Breast epithelium (tissue), 4 donors: ENCODE measurements at regions of chr2 and their contacts with region 1.

Region 1: GRCh38 chr2:46989491-46990230 is 74.1 kb upstream of the MCFD2 start:
- DNase-seq: no peak
- H3K4me3 ChIP-seq: no peak overlapping the region
- H3K27ac ChIP-seq: peak overlapping the region; percentile 89 to 93
- H3K4me1 ChIP-seq: peaks cover 27 to 48% of the 10 kb centered on the region in 2 donors
- H3K27me3 ChIP-seq: no peaks in the 10 kb centered on the region
- CTCF ChIP-seq: peak in 1 of 3 donors; percentile 15
- POLR2A ChIP-seq: no peak

Region 2: GRCh38 chr2:46481198-46482193 is 508.2 kb before region 1 on chr2:
- intact Hi-C with region 1: no loop called
- DNase-seq: no peak
- H3K4me3 ChIP-seq: no peak overlapping the region
- H3K27ac ChIP-seq: no peak overlapping the region
- H3K4me1 ChIP-seq: no peaks in the 10 kb centered on the region
- H3K27me3 ChIP-seq: no peaks in the 10 kb centered on the region
- CTCF ChIP-seq: no peak
- POLR2A ChIP-seq: no peak

Region 3: DNA sequence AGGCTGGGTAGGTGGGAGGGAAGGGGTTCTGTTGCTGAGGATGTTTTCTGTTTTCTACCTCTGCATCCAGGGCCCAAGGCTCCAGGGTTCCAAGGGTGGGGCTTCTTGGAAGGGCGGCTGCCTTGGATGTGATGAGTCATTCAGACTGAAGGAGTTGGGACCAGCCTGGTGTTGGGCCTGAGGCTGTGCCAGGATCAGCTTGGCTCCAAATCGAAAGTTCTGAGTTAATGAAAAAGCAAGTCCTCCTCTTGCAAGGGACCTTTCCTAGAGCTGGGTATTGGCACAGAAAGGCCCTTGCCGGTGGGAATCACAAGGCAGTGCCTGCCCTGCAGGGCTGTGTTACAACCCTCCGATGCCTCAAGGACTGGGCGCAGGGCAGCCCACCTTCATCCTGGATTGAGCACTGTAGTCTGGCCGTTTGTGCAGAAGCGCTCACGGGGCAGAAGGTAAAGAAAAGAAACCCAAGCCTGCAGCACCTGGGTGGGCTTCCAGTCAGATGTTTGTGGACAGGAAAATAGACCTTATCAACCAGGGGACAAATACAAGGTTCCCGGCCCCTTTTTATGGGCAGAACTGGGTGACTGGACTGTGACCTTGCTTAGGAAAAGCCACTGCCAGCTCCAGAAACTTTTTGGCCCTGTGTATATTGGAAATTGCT is 21.5 kb before region 1 on chr2:
- intact Hi-C with region 1: no loop called
- DNase-seq: peak; percentile 65 to 85
- H3K4me3 ChIP-seq: peak overlapping the region in 2 of 3 donors; percentile 14 to 38
- H3K27ac ChIP-seq: peak overlapping the region; percentile 89 to 91
- H3K4me1 ChIP-seq: peaks cover 17 to 34% of the 10 kb centered on the region in 2 donors
- H3K27me3 ChIP-seq: no peaks in the 10 kb centered on the region
- CTCF ChIP-seq: no peak
- POLR2A ChIP-seq: no peak

Region 4: GRCh38 chr2:47016172-47016913 is 26.7 kb after region 1 on chr2:
- intact Hi-C with region 1: no loop called
- DNase-seq: no peak
- H3K4me3 ChIP-seq: no peak overlapping the region
- H3K27ac ChIP-seq: peak overlapping the region in 1 of 2 donors; percentile 21
- H3K4me1 ChIP-seq: peaks cover 0 to 10% of the 10 kb centered on the region in 2 donors
- H3K27me3 ChIP-seq: no peaks in the 10 kb centered on the region
- CTCF ChIP-seq: no peak
- POLR2A ChIP-seq: no peak

Region 5: GRCh38 chr2:47155091-47155876 is 165.6 kb after region 1 on chr2 and contains the start of gene STPG4:
- intact Hi-C with region 1: loop called (anchors 10 kb)
- DNase-seq: no peak
- H3K4me3 ChIP-seq: no peak within 1 kb of the TSS
- H3K27ac ChIP-seq: peak within 1 kb of the TSS in 1 of 2 donors; percentile 10
- H3K4me1 ChIP-seq: no peaks in the 10 kb centered on the region
- H3K27me3 ChIP-seq: no peaks in the 10 kb centered on the region
- CTCF ChIP-seq: no peak
- POLR2A ChIP-seq: no peak
- total RNA-seq, gene STPG4: 0.32 TPM in 1 of 3 donors, not detected in the others

Region 6: DNA sequence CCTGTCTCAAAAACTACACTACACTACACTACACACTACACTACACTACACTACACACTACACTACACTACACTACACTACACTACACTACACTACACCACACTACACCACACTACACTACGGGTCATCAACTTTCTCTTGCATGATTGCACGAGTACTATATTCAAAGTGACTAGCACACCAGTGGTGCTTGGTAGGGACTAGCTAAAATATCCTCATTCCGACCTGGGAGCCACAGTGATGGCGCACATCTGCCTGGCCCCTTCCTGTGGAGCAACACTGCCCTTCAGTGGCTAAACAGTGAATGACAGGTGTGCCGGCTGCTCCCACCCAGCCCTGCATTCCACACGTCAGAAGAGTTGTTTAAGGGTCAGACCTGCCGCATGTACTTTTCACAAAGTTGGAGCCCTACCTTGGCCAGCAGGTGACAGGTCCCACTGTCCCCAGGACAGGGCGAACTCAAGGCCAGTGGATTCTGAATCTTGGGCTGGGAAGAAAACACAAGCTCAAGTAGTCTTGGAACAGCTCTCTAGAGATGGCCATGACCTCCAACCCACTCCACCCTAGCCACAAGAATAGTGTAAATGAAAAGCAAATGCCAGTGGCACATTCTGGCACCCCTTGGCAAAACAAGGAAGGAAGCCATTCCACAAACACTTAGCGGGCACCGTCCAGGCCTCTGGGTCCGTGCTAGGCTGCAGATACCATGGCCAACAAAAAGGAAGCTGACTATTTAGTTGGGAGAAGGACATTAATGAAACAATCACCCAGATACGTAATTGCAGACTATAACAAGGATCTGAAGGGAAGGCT is 333.6 kb after region 1 on chr2:
- intact Hi-C with region 1: loop called (anchors 10 kb)
- DNase-seq: peak; percentile 67 to 70
- H3K4me3 ChIP-seq: no peak overlapping the region
- H3K27ac ChIP-seq: peak overlapping the region in 1 of 2 donors; percentile 35
- H3K4me1 ChIP-seq: no peaks in the 10 kb centered on the region
- H3K27me3 ChIP-seq: no peaks in the 10 kb centered on the region
- CTCF ChIP-seq: peak; percentile 88 to 98 (median 98)
- POLR2A ChIP-seq: no peak

Region 7: DNA sequence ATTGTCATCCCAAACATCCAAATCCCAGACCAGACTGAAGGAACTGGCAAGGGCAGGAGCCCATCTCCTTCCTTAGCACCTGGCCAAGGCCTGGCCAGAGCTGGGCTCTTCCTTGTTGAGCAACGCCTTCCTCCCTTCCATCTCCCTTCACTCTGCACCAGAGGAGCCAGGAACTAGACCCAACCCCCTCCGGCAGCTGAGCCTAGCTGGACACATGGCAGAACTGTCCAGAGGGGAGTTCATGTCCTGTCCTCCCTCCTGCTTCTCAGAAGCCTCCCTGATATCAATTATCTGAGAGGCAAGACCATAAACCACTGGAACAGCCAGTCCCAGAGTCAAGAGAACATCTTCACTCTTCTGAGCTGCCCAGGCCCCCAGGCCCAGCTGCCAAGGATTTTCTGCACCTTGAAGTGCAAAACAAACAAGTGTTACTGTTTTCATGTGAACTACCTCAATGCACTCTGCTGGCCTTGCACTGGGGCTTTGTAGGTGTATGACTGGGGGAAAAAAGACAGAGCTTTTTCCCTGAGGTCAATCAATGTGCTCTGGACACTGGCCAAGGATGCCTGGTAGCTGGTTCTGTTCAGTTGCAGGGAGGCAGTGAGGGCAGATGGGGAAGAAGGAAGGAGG is 685.6 kb after region 1 on chr2:
- intact Hi-C with region 1: no loop called
- DNase-seq: no peak
- H3K4me3 ChIP-seq: no peak overlapping the region
- H3K27ac ChIP-seq: no peak overlapping the region
- H3K4me1 ChIP-seq: no peaks in the 10 kb centered on the region
- H3K27me3 ChIP-seq: no peaks in the 10 kb centered on the region
- CTCF ChIP-seq: no peak
- POLR2A ChIP-seq: no peak